HEK293 (cell line): ENCODE measurements at regions of chr16 and their contacts with region 1.

Region 1: GRCh38 chr16:63289852-63290460 is 1253.7 kb upstream of the CDH8 start:
- H3K4me3 ChIP-seq: no peak overlapping the region
- H3K27ac ChIP-seq: no peak overlapping the region
- H3K4me1 ChIP-seq: no peaks in the 10 kb centered on the region
- CTCF ChIP-seq: 0 out of 2 replicates have a peak, but pooled peaks have one; percentile 31

Region 2: GRCh38 chr16:62190426-62190825 is 1099.5 kb before region 1 on chr16:
- CTCF ChIA-PET with region 1: interaction called, 14 read pairs
- POLR2A ChIA-PET with region 1: no interaction called
- H3K4me3 ChIP-seq: no peak overlapping the region
- H3K27ac ChIP-seq: no peak overlapping the region
- H3K4me1 ChIP-seq: no peaks in the 10 kb centered on the region
- CTCF ChIP-seq: no peak

Region 3: GRCh38 chr16:62225697-62226280 is 1064.2 kb before region 1 on chr16:
- CTCF ChIA-PET with region 1: interaction called, 20 read pairs
- POLR2A ChIA-PET with region 1: no interaction called
- H3K4me3 ChIP-seq: no peak overlapping the region
- H3K27ac ChIP-seq: no peak overlapping the region
- H3K4me1 ChIP-seq: no peaks in the 10 kb centered on the region
- CTCF ChIP-seq: no peak